ENCODE measurements at regions of chr1 and their contacts with region 1.

Region 1: DNA sequence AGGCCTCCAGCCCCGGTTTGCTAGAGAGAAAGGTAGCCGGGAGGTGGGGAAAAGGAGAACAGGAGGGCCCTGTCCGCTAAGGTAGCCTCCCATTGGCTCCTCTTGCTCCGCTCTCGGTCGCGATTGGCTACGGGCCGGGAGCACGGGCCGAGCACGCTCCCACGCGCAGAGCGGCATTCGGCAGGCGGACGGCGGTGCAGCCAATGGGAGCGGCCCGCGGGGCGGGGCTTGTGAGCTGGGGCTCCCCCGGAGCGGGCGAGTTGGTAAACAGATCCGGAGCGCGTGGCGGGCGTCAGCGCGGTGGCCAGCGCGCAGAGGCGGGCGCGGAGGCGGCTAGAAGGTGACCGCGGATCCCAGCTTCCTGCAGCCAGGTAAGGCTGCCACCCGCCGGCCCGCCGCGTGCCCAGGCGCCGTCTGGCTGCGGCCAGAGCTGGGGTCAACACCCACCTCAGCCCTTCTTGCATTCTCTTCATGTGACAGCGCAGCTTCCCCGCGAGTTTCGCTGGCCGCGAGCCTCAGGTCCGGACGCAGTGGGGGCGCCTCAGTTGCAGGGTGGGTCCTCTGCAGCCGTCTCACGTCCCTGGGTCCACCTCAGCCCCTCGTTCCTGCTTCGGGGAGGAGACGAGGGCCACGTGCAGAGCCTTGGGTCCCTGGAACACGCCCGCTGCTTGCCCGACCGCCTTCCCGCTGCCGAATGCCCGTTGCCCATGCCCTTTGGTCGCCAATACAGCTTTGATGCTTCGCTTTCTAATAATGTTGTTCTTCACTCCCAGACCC is at the start of gene COQ8A:
- DNase-seq: peak; percentile 100
- H3K4me3 ChIP-seq: peak within 1 kb of the TSS; percentile 86 to 90
- H3K27ac ChIP-seq: peak within 1 kb of the TSS; percentile 93
- H3K4me1 ChIP-seq: peaks cover 41% of the 10 kb centered on the region
- H3K27me3 ChIP-seq: no peaks in the 10 kb centered on the region
- CTCF ChIP-seq: no peak
- POLR2A ChIP-seq: peak in 1 of 2 donors; percentile 7
- total RNA-seq, gene COQ8A: 44.9 TPM

Region 2: GRCh38 chr1:225388372-225388771 is 1551.8 kb before region 1 on chr1:
- intact Hi-C with region 1: no loop called
- DNase-seq: no peak
- H3K4me3 ChIP-seq: no peak overlapping the region
- H3K27ac ChIP-seq: no peak overlapping the region
- H3K4me1 ChIP-seq: no peaks in the 10 kb centered on the region
- H3K27me3 ChIP-seq: no peaks in the 10 kb centered on the region
- CTCF ChIP-seq: no peak
- POLR2A ChIP-seq: no peak

Region 3: GRCh38 chr1:226310054-226310540 is 630.1 kb before region 1 on chr1:
- intact Hi-C with region 1: no loop called
- DNase-seq: peak in 1 of 2 donors; percentile 58
- H3K4me3 ChIP-seq: peak overlapping the region; percentile 88 to 94
- H3K27ac ChIP-seq: peak overlapping the region; percentile 86
- H3K4me1 ChIP-seq: peaks cover 28% of the 10 kb centered on the region
- H3K27me3 ChIP-seq: no peaks in the 10 kb centered on the region
- CTCF ChIP-seq: no peak
- POLR2A ChIP-seq: no peak

Region 4: GRCh38 chr1:226973898-226974543 is 33.8 kb after region 1 on chr1:
- intact Hi-C with region 1: loop called (anchors 2 kb)
- DNase-seq: peak in 1 of 2 donors; percentile 94
- H3K4me3 ChIP-seq: peak overlapping the region in 1 of 2 donors; percentile 17
- H3K27ac ChIP-seq: peak overlapping the region; percentile 82
- H3K4me1 ChIP-seq: peaks cover 25% of the 10 kb centered on the region
- H3K27me3 ChIP-seq: no peaks in the 10 kb centered on the region
- CTCF ChIP-seq: no peak
- POLR2A ChIP-seq: peak in 1 of 2 donors; percentile 15

Measured in vagina (tissue), 2 donors.